Psoas muscle (tissue), 8 donors: ENCODE measurements at regions of chr12 and their contacts with region 1.

Region 1: DNA sequence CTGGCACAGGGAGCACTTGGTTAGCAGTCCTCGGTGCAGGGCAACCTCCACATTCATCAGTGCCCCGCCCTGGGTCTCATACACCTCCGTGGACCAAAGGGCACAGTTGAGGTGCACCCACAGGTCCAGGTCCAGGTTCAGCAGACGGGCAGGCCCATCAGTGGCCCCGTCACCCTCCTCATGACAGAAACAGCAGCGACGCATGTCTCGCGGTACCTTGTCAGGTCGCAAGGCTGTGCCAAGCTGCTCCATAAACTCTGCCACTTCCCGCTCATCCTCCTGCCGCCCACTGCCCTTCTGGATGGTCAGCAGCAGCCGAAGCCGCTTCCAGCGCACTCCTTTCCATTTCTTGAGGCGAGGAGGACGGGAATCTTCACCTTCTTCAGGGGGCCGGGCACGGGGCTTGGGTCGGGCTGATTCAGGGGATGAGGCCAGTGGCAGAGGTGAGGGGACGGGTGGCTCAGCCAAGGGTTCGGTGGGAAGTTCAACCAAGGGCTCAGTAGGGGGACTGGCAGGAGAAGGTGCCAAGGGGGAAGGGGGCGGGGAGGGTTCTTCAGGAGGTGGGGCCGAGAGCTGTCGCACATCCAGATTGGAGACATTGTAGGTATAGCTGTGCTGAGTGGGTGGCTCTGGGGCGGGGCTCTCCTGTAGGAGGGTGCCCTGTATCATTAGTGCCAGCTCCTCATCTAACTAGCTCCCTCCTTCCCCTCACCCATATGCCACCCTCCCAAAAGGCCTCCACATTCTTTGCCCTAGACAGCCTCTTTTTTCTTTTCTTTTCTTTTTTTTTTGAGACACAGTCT is 8.3 kb upstream of the PRKAG1 start:
- DNase-seq: peak in 1 of 2 donors; percentile 51
- ATAC-seq: no peak
- H3K4me3 ChIP-seq: no peak overlapping the region
- H3K27ac ChIP-seq: no peak overlapping the region
- H3K4me1 ChIP-seq: no peaks in the 10 kb centered on the region
- H3K27me3 ChIP-seq: no peaks in the 10 kb centered on the region
- CTCF ChIP-seq: no peak

Region 2: GRCh38 chr12:48995061-48995879 is 31.6 kb before region 1 on chr12:
- intact Hi-C with region 1: no loop called
- DNase-seq: peak; percentile 86 to 90
- ATAC-seq: peak; percentile 69 to 80 (median 75)
- H3K4me3 ChIP-seq: peak overlapping the region; percentile 58
- H3K27ac ChIP-seq: no peak overlapping the region
- H3K4me1 ChIP-seq: peaks cover 31% of the 10 kb centered on the region
- H3K27me3 ChIP-seq: peaks cover 0 to 63% (median 0%) of the 10 kb centered on the region in 3 donors
- CTCF ChIP-seq: peak; percentile 88

Region 3: GRCh38 chr12:49046129-49046895 is 19.4 kb after region 1 on chr12:
- intact Hi-C with region 1: loop called in 1 of 2 experiments (anchors 2 kb)
- DNase-seq: peak in 1 of 2 donors; percentile 65
- ATAC-seq: peak in 2 of 4 donors; percentile 19 to 27
- H3K4me3 ChIP-seq: no peak overlapping the region
- H3K27ac ChIP-seq: no peak overlapping the region
- H3K4me1 ChIP-seq: no peaks in the 10 kb centered on the region
- H3K27me3 ChIP-seq: no peaks in the 10 kb centered on the region
- CTCF ChIP-seq: no peak